ENCODE measurements at regions of chr5 and their contacts with region 1.

Region 1: DNA sequence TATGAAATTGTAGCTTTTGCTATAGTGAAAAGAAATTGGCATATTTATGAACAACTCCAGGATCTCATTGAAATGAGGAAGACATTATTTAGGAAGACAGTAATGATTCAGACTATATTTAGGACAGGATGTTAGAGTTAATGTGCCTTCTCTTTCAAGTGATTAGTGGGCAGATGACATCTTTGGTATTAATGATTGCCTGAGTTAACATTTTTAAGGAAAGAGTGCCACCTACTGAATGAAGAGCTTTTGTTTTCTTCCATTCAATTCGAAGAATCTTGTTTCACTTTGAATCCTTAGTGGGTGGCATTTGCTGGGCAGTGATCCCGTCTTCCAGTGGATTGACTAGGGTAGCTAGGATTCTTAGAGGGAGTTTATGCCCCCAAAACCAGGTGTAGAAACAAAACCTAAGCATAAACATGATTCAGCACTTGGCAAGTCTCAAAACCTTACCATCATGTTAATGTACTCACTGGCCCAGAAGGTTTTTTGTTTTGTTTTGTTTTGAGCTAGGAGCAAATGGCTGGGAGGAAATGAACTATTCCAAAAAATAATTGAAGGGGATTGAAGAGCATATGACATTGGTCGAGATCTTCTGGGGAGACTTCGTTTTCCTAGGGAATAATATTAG is 23.2 kb downstream of the MAP3K1 start:
- DNase-seq: no peak
- ATAC-seq: peak; percentile 57 to 87 (median 64)
- H3K4me3 ChIP-seq: peak overlapping the region; percentile 44
- H3K27ac ChIP-seq: peak overlapping the region; percentile 20
- H3K4me1 ChIP-seq: peaks cover 43% of the 10 kb centered on the region
- H3K27me3 ChIP-seq: no peaks in the 10 kb centered on the region
- CTCF ChIP-seq: peak; percentile 62

Region 2: GRCh38 chr5:55936100-55936693 is 902.3 kb before region 1 on chr5:
- intact Hi-C with region 1: loop called (anchors 2 to 10 kb)
- DNase-seq: peak; percentile 76 to 89
- ATAC-seq: peak; percentile 63 to 77 (median 72)
- H3K4me3 ChIP-seq: no peak overlapping the region
- H3K27ac ChIP-seq: no peak overlapping the region
- H3K4me1 ChIP-seq: no peaks in the 10 kb centered on the region
- H3K27me3 ChIP-seq: no peaks in the 10 kb centered on the region
- CTCF ChIP-seq: peak; percentile 89

Region 3: GRCh38 chr5:56270568-56271392 is 567.7 kb before region 1 on chr5:
- intact Hi-C with region 1: loop called (anchors 1 to 5 kb)
- DNase-seq: peak; percentile 72 to 81
- ATAC-seq: peak; percentile 89 to 99 (median 98)
- H3K4me3 ChIP-seq: no peak overlapping the region
- H3K27ac ChIP-seq: no peak overlapping the region
- H3K4me1 ChIP-seq: no peaks in the 10 kb centered on the region
- H3K27me3 ChIP-seq: no peaks in the 10 kb centered on the region
- CTCF ChIP-seq: peak; percentile 97

Region 4: DNA sequence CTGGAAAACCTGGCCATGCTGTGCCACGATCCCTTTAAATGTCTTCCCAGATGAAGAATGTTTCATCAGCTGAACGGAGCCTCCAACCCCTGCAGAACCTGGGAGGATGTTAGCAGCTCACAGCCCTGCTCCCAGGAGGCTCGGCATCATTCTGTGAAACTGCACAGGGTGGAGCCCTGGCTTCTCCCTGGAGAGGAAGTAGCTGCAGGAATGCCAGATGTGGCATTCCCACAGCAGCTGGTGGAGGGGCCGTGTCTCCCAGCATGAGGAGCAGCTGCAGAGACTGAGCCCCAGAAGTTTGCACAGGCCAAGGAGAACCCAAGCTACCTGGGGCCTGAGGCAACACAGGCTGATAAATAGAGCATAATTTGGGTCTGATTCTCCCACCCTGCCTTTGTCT is 189.0 kb before region 1 on chr5:
- intact Hi-C with region 1: no loop called
- DNase-seq: peak; percentile 14 to 55
- ATAC-seq: no peak
- H3K4me3 ChIP-seq: no peak overlapping the region
- H3K27ac ChIP-seq: no peak overlapping the region
- H3K4me1 ChIP-seq: no peaks in the 10 kb centered on the region
- H3K27me3 ChIP-seq: no peaks in the 10 kb centered on the region
- CTCF ChIP-seq: no peak

Measured in psoas muscle (tissue), 8 donors.